B cell (primary cell): ENCODE measurements at regions of chr19 and their contacts with region 1.

Region 1: DNA sequence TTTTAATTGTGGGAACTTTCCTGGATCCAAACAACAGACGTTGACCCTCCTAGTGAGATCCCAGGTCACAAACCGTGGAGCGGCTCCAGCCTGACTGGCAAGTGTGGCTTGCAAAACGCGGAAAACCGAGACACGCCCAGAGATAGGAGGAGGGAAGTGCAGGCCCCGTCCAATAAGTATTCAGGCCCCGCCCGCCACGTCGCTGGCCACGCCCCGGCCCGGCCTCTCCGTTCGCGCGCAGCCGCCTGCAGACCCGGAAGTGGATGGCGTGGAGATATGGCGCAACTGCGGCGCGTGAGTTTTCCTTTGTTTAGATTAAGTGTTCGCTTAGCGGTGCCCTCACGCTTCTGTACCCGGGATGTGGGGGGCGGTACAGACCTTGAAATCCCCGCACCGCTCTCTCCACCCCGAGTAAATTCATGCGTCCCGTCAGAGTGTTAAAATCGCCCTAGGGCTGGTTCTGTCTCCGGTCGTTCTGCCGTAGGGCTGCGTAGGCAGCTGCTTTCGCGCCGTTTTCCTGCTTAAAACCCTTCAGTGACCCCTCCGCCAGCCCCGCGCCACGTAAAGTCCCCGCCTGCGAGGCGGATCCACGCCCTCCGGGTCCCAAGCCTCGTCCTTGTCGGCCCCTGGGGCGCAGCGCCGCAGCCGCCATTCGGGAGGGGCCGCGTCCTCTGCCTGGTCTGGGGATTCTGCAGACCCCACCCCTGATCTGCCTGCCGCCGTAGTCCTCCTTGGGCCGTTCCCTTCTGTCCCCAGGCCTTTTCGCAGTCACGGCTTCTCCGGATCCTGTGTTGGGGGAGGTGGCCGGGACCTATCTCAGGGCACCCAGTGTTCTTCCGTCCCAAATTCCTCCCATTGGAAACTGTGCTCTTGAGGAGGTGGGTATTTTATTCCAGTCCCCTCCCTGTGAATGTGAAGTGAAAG is at the start of gene ZNF766:
- DNase-seq: peak; percentile 96
- ATAC-seq: peak; percentile 99
- H3K4me3 ChIP-seq: peak within 1 kb of the TSS; percentile 83 to 100 (median 96)
- H3K4me3 Mint-ChIP-seq: peak within 1 kb of the TSS; percentile 95
- H3K27ac ChIP-seq: peak within 1 kb of the TSS; percentile 87 to 97
- H3K27ac Mint-ChIP-seq: peak within 1 kb of the TSS; percentile 96
- H3K4me1 ChIP-seq: peaks cover 12 to 21% of the 10 kb centered on the region in 2 donors
- H3K4me1 Mint-ChIP-seq: peaks cover 40% of the 10 kb centered on the region
- H3K27me3 ChIP-seq: no peaks in the 10 kb centered on the region
- H3K27me3 Mint-ChIP-seq: no peaks in the 10 kb centered on the region
- CTCF ChIP-seq: no peak
- total RNA-seq, gene ZNF766: 41.1 and 48.3 TPM in 2 replicates

Region 2: GRCh38 chr19:52139252-52140031 is 130.2 kb before region 1 on chr19 and contains the start of gene ZNF616:
- CTCF ChIA-PET with region 1: no interaction called
- POLR2A ChIA-PET with region 1: no interaction called
- intact Hi-C with region 1: loop called (anchors 1 kb)
- DNase-seq: peak; percentile 96
- ATAC-seq: peak; percentile 66
- H3K4me3 ChIP-seq: peak within 1 kb of the TSS; percentile 86 to 100 (median 97)
- H3K4me3 Mint-ChIP-seq: peak within 1 kb of the TSS; percentile 98
- H3K27ac ChIP-seq: peak within 1 kb of the TSS; percentile 66 to 84
- H3K27ac Mint-ChIP-seq: peak within 1 kb of the TSS; percentile 93
- H3K4me1 ChIP-seq: peaks cover 16 to 18% of the 10 kb centered on the region in 2 donors
- H3K4me1 Mint-ChIP-seq: peaks cover 27% of the 10 kb centered on the region
- H3K27me3 ChIP-seq: no peaks in the 10 kb centered on the region
- H3K27me3 Mint-ChIP-seq: no peaks in the 10 kb centered on the region
- CTCF ChIP-seq: peak; percentile 86
- total RNA-seq, gene ZNF616: 13.8 and 14.2 TPM in 2 replicates

Region 3: GRCh38 chr19:52189735-52190486 is 79.7 kb before region 1 on chr19 and contains the start of gene PPP2R1A:
- CTCF ChIA-PET with region 1: no interaction called
- POLR2A ChIA-PET with region 1: no interaction called
- intact Hi-C with region 1: loop called (anchors 1 kb)
- DNase-seq: peak; percentile 100
- ATAC-seq: peak; percentile 74
- H3K4me3 ChIP-seq: peak within 1 kb of the TSS; percentile 60 to 100 (median 85)
- H3K4me3 Mint-ChIP-seq: peak within 1 kb of the TSS; percentile 99
- H3K27ac ChIP-seq: peak within 1 kb of the TSS; percentile 89 to 99
- H3K27ac Mint-ChIP-seq: peak within 1 kb of the TSS; percentile 100
- H3K4me1 ChIP-seq: peaks cover 41 to 56% of the 10 kb centered on the region in 2 donors
- H3K4me1 Mint-ChIP-seq: peaks cover 45% of the 10 kb centered on the region
- H3K27me3 ChIP-seq: no peaks in the 10 kb centered on the region
- H3K27me3 Mint-ChIP-seq: no peaks in the 10 kb centered on the region
- CTCF ChIP-seq: no peak
- total RNA-seq, gene PPP2R1A: 202 and 227 TPM in 2 replicates

Region 4: GRCh38 chr19:52291781-52292180 is 22.2 kb after region 1 on chr19:
- CTCF ChIA-PET with region 1: no interaction called
- POLR2A ChIA-PET with region 1: no interaction called
- intact Hi-C with region 1: no loop called
- DNase-seq: no peak
- ATAC-seq: no peak
- H3K4me3 ChIP-seq: no peak overlapping the region
- H3K4me3 Mint-ChIP-seq: no peak overlapping the region
- H3K27ac ChIP-seq: no peak overlapping the region
- H3K27ac Mint-ChIP-seq: no peak overlapping the region
- H3K4me1 ChIP-seq: peaks cover 4 to 6% of the 10 kb centered on the region in 2 donors
- H3K4me1 Mint-ChIP-seq: peaks cover 2% of the 10 kb centered on the region
- H3K27me3 ChIP-seq: no peaks in the 10 kb centered on the region
- H3K27me3 Mint-ChIP-seq: no peaks in the 10 kb centered on the region
- CTCF ChIP-seq: no peak

Region 5: GRCh38 chr19:52397310-52398080 is 127.9 kb after region 1 on chr19 and contains the start of gene ZNF528:
- CTCF ChIA-PET with region 1: no interaction called
- POLR2A ChIA-PET with region 1: no interaction called
- intact Hi-C with region 1: loop called (anchors 1 kb)
- DNase-seq: peak; percentile 92
- ATAC-seq: peak; percentile 98
- H3K4me3 ChIP-seq: peak within 1 kb of the TSS; percentile 61 to 89 (median 72)
- H3K4me3 Mint-ChIP-seq: peak within 1 kb of the TSS; percentile 90
- H3K27ac ChIP-seq: peak within 1 kb of the TSS; percentile 60 to 77
- H3K27ac Mint-ChIP-seq: peak within 1 kb of the TSS; percentile 94
- H3K4me1 ChIP-seq: peaks cover 15 to 17% of the 10 kb centered on the region in 2 donors
- H3K4me1 Mint-ChIP-seq: peaks cover 20% of the 10 kb centered on the region
- H3K27me3 ChIP-seq: no peaks in the 10 kb centered on the region
- H3K27me3 Mint-ChIP-seq: no peaks in the 10 kb centered on the region
- CTCF ChIP-seq: no peak
- total RNA-seq, gene ZNF528: 69.2 and 71.8 TPM in 2 replicates

Region 6: DNA sequence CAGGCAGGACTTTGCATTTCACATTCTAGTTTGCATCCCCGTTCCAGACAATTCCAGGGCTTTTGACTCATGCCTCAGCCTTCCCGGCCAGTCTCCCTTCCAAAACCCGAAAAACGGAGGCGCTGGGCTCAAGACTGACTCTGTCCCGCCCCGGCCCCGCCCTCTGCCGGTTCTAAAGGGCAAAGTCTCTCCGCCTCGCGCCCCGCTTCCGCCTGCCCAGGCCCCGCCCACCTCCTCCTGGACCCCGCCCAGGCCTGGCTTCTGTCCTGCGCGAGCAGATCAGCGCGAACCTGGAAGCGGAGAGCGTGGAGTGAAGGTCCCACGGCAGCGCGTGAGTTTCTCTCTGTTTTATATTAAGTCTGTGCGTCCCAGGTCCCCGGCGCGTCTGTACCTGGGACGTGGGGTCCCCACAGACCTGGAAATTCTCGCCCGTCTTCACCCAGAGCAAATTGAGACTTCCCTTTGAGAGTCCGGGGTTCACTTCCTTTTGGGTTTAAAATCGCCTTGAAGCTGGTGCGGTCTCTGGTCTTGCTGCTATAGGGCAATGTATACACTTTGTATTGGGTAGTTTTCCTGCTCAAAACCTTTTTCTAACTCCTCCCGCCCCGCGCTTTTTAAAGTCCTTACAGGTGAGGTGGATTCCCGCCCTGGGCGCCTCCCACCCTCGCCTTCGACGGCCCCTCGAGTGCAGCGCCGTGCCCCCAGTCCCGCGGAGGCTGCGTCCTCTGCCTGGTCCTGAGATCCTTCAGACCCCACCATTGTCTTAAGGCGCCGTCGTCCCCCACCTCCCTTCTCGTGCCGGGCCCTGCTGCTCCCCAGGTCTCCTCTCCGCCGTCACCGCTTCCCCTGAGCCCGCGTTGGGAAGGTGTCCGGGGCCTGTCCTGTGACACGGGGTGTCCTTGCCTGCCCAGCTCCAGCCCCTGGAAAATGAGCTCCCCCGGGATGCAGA is 331.7 kb after region 1 on chr19:
- CTCF ChIA-PET with region 1: no interaction called
- POLR2A ChIA-PET with region 1: no interaction called
- intact Hi-C with region 1: loop called (anchors 1 kb)
- DNase-seq: peak; percentile 92
- ATAC-seq: peak; percentile 99
- H3K4me3 ChIP-seq: peak overlapping the region; percentile 59 to 89 (median 82)
- H3K4me3 Mint-ChIP-seq: peak overlapping the region; percentile 90
- H3K27ac ChIP-seq: peak overlapping the region; percentile 43 to 62
- H3K27ac Mint-ChIP-seq: peak overlapping the region; percentile 87
- H3K4me1 ChIP-seq: peaks cover 11 to 16% of the 10 kb centered on the region in 2 donors
- H3K4me1 Mint-ChIP-seq: peaks cover 25% of the 10 kb centered on the region
- H3K27me3 ChIP-seq: no peaks in the 10 kb centered on the region
- H3K27me3 Mint-ChIP-seq: no peaks in the 10 kb centered on the region
- CTCF ChIP-seq: peak; percentile 61

Region 7: GRCh38 chr19:52786457-52787359 is 517.1 kb after region 1 on chr19 and contains the start of gene ZNF600:
- CTCF ChIA-PET with region 1: no interaction called
- POLR2A ChIA-PET with region 1: no interaction called
- intact Hi-C with region 1: loop called (anchors 1 kb)
- DNase-seq: peak; percentile 83
- ATAC-seq: peak; percentile 99
- H3K4me3 ChIP-seq: peak within 1 kb of the TSS; percentile 63 to 96 (median 78)
- H3K4me3 Mint-ChIP-seq: peak within 1 kb of the TSS; percentile 97
- H3K27ac ChIP-seq: peak within 1 kb of the TSS; percentile 40 to 69
- H3K27ac Mint-ChIP-seq: peak within 1 kb of the TSS; percentile 92
- H3K4me1 ChIP-seq: peaks cover 4 to 18% of the 10 kb centered on the region in 2 donors
- H3K4me1 Mint-ChIP-seq: peaks cover 31% of the 10 kb centered on the region
- H3K27me3 ChIP-seq: no peaks in the 10 kb centered on the region
- H3K27me3 Mint-ChIP-seq: no peaks in the 10 kb centered on the region
- CTCF ChIP-seq: peak; percentile 21
- total RNA-seq, gene ZNF600: 41.7 and 51.6 TPM in 2 replicates